ENCODE measurements at regions of chr22 and their contacts with region 1.

Region 1: DNA sequence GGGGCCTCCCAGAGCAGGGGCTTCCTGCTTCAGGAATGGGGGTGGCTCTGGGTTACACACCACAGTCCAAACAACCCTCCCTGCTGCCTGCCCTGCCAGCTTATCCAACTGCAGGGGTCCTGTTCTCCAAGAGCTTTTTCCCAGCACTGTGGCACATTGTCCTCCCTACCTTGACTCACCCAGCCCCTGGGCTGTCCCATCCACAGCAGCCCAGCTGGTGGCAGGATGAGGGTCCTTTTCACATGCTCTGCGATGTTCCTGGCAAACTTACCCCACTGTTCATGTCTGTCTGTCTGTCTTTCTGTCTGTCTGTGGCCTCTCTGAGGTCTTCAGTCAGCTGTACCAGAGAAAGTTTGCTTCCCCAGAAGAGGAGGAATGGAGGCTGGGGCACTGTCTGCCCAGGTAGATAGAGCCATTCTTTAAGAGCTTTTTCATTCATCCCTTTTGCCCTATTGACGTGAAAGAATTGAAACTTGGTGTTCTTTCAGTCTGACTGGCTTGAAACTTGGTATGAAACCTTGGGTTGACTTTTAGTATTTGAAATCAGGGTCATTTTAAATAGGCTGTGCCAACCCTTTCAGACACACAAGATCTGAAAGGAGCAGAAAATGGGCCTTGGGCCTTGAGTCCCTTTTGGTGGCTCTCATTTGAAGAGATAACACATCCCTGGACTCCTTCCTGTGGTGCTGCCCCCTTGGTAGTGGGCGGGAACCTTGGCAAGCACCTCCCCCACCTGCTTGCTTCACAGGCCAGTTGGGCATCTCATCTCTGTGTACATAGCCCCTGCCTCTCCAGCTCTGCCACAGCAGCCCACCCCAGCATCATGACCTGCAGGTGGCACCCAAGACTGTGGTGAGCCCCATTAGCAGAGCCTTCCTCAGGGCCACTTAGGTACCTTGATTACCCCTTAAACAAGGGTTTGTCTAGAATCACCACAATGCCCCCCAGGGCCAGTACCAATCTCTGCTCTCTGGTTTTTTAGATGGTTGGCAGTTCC is 74.6 kb upstream of the SUSD2 start:
- DNase-seq: no peak
- H3K4me3 ChIP-seq: no peak overlapping the region
- H3K27ac ChIP-seq: peak overlapping the region; percentile 47 to 76 (median 72)
- H3K4me1 ChIP-seq: peaks cover 0 to 47% (median 35%) of the 10 kb centered on the region in 4 donors
- H3K27me3 ChIP-seq: no peaks in the 10 kb centered on the region
- CTCF ChIP-seq: peak in 1 of 4 experiments; percentile 19
- EP300 ChIP-seq: no peak
- POLR2A ChIP-seq: no peak

Region 2: DNA sequence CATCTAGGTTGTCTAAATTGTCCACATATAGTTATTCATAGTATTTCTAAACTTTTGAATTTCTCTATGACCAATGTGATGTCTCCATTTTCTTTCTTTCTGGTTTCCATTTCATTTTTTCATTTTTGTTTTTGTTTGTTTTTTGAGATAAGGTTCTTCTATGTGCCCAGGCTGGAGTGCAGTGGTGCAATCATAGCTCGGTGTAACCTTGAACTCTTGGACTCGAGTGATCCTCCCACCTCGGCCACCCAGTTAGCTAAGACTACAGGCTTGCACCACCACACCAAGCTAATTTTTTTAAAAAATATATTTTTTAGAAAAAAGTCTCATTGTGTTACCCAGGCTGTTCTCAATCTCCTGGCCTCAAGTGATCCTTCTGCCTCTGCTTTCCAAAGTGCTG is 109.6 kb before region 1 on chr22:
- intact Hi-C with region 1: no loop called
- DNase-seq: no peak
- H3K4me3 ChIP-seq: no peak overlapping the region
- H3K27ac ChIP-seq: no peak overlapping the region
- H3K4me1 ChIP-seq: no peaks in the 10 kb centered on the region
- H3K27me3 ChIP-seq: no peaks in the 10 kb centered on the region
- CTCF ChIP-seq: no peak
- EP300 ChIP-seq: no peak
- POLR2A ChIP-seq: no peak

Region 3: DNA sequence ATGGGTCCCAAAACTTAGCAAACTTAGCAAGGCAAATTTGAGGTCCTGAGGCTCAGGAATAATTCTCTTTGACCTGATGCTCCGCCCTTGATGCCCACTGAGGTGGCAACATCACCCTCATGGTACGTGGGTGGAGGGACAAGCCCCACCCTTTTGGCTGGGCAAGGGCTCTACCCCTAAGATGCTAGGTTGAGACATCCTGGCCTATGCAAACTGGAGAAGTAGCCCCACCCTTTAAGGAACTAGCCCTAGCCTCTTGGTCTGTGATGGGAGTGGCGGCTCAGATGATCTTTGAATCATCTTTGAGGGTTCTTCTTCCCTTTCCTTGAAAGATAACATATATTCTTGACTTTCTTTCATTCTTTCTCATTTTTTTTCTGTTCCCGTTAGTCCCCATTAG is 62.7 kb before region 1 on chr22:
- intact Hi-C with region 1: no loop called
- DNase-seq: no peak
- H3K4me3 ChIP-seq: no peak overlapping the region
- H3K27ac ChIP-seq: no peak overlapping the region
- H3K4me1 ChIP-seq: no peaks in the 10 kb centered on the region
- H3K27me3 ChIP-seq: no peaks in the 10 kb centered on the region
- CTCF ChIP-seq: no peak
- EP300 ChIP-seq: no peak
- POLR2A ChIP-seq: no peak

Region 4: GRCh38 chr22:24155627-24156140 is 49.0 kb after region 1 on chr22:
- intact Hi-C with region 1: loop called (anchors 2 kb)
- DNase-seq: peak; percentile 94
- H3K4me3 ChIP-seq: peak overlapping the region; percentile 63 to 93 (median 72)
- H3K27ac ChIP-seq: peak overlapping the region; percentile 85 to 96 (median 92)
- H3K4me1 ChIP-seq: peaks cover 0 to 49% (median 40%) of the 10 kb centered on the region in 4 donors
- H3K27me3 ChIP-seq: no peaks in the 10 kb centered on the region
- CTCF ChIP-seq: peak in 2 of 4 experiments; percentile 32 to 45
- EP300 ChIP-seq: no peak
- POLR2A ChIP-seq: no peak

Region 5: DNA sequence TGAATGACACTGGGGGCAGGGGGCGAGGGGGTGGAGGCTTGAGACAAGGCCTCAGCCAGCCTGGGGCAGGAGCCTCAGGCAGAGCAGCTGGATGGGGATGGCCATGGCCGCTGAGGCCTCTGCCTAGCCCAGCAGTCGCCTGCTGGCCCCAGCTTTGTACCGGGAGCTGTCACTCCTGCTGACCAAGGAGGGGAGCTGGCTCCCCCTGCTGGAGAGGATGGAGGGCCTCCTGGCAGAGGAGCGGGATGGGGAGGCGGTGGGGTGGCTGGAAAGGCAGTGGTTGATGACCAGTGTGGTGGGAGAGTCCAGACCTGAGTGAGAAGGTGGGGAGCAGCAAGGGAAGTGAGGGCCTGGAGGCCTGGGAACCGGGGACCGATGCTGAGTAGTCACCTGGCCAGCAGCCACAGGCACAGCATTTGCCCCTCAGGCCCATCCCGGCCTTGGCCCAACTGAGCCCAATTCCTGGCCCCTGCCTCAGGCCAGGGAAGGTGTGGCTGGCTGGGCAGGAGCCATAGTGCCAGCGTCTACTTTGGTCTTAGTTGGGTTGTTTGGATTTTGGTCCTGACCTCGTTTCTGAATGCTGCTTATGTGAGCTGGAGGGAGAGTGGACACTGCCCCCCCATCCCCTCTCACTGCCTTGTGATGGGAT is 68.6 kb after region 1 on chr22:
- intact Hi-C with region 1: loop called (anchors 1 kb)
- DNase-seq: peak; percentile 94
- H3K4me3 ChIP-seq: no peak overlapping the region
- H3K27ac ChIP-seq: peak overlapping the region; percentile 78 to 87 (median 84)
- H3K4me1 ChIP-seq: peaks cover 0 to 48% (median 43%) of the 10 kb centered on the region in 4 donors
- H3K27me3 ChIP-seq: no peaks in the 10 kb centered on the region
- CTCF ChIP-seq: peak; percentile 87 to 95 (median 89)
- EP300 ChIP-seq: no peak
- POLR2A ChIP-seq: no peak

Region 6: DNA sequence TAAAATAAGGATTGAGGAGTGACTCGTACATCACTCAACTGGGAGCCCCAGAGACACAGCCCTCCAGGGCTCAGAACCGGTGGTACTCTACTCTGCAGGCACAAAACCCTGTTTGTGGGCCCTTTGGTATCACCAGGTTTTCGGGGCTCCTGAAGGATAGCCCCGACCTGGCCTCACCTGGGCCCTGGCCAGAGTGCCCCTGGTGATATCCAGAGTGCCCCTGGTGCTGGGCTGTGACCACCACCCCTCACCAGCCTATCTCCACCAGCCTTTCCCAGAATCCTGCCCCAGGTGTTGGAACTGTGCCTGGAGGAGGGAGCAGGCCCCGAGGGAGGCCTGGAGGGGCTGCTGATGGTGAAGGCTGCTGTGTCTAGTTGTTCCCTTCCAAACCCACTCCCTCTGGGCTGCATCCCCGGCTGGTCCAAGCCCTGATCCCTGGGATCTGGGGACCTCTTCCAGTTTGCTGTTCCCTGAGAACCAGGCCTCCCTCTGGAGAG is 140.4 kb after region 1 on chr22:
- intact Hi-C with region 1: loop called (anchors 5 kb)
- DNase-seq: no peak
- H3K4me3 ChIP-seq: no peak overlapping the region
- H3K27ac ChIP-seq: peak overlapping the region; percentile 78 to 82 (median 78)
- H3K4me1 ChIP-seq: peaks cover 0 to 34% (median 31%) of the 10 kb centered on the region in 4 donors
- H3K27me3 ChIP-seq: no peaks in the 10 kb centered on the region
- CTCF ChIP-seq: no peak
- EP300 ChIP-seq: no peak
- POLR2A ChIP-seq: no peak

Measured in sigmoid colon (tissue), 7 donors.